ENCODE measurements at regions of chr7 and their contacts with region 1.

Region 1: GRCh38 chr7:77235276-77235675 is 35.7 kb upstream of the FGL2 start:
- DNase-seq: no peak

Region 2: DNA sequence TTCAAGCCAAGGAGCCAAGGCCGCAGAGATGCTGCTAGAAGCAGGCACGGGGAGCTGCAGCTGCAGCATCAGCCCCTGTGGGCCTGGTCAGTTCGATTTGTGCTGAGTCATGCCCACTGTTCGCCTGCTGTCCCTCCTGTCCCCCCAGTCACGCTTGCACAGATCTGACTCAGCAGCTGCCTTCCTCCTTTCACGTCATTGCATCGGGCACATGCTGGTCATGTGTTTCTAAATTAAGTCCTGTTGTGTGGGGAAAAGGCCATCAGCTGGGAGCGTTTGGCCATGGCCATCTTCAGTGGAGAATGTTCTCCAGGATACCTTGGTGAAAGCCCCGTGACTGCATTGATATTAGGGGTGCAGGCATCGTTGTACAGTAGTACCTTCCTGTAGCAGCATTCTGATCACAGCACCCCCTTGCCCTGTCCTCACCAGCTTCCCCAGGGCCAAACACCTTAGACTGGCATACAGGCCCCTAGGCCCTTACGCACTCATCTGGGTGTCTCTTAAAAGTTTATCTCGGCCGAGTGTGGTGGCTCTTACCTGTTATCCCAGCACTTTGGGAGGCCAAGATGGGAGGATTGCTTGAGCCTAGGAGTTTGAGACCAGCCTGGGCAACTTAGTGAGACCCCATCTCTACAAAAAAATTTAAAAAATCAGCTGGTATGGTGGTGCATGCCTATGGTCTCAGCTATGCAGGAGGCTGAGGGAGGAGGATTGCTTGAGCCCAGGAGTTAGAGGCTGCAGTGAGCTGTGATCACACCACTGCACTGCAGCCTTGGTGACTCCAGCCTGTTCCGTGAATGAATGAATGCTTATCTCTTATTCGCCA is 1297.1 kb before region 1 on chr7:
- intact Hi-C with region 1: loop called in 1 of 2 experiments (anchors 5 kb)
- DNase-seq: peak; percentile 89

Region 3: DNA sequence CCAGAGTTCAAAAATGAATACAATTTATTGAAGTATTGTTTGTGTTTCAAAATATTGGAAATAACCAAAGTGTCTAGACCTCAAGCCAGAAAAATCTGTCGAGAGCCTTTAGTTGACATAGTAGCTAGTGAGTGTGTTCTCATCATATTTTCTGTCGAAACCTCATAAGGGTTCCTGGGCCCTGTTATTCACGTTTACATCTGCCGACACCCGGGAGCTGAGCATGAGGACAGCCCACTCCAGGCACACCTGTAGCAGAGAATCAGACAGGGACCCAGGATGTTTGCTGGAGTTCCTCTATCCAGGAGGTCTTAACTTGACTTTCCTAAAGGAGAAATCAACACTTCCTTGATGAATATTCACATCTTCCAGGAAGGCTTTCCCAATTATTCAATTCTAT is 36.5 kb after region 1 on chr7:
- intact Hi-C with region 1: loop called in 1 of 2 experiments (anchors 2 kb)
- DNase-seq: no peak

Measured in posterior vena cava (tissue), 2 donors.